Activated CD8-positive, alpha-beta T cell treated with anti-CD3 and anti-CD28 coated beads for 36 hours (primary cell): ENCODE measurements at regions of chr7 and their contacts with region 1.

Region 1: GRCh38 chr7:89334797-89335196 is 539.3 kb upstream of the TEX47 start:
- DNase-seq: no peak
- ATAC-seq: no peak
- H3K4me3 Mint-ChIP-seq: no peak overlapping the region
- H3K27ac Mint-ChIP-seq: no peak overlapping the region
- H3K4me1 Mint-ChIP-seq: peaks cover 2% of the 10 kb centered on the region
- H3K27me3 Mint-ChIP-seq: no peaks in the 10 kb centered on the region
- CTCF ChIP-seq: no peak

Region 2: DNA sequence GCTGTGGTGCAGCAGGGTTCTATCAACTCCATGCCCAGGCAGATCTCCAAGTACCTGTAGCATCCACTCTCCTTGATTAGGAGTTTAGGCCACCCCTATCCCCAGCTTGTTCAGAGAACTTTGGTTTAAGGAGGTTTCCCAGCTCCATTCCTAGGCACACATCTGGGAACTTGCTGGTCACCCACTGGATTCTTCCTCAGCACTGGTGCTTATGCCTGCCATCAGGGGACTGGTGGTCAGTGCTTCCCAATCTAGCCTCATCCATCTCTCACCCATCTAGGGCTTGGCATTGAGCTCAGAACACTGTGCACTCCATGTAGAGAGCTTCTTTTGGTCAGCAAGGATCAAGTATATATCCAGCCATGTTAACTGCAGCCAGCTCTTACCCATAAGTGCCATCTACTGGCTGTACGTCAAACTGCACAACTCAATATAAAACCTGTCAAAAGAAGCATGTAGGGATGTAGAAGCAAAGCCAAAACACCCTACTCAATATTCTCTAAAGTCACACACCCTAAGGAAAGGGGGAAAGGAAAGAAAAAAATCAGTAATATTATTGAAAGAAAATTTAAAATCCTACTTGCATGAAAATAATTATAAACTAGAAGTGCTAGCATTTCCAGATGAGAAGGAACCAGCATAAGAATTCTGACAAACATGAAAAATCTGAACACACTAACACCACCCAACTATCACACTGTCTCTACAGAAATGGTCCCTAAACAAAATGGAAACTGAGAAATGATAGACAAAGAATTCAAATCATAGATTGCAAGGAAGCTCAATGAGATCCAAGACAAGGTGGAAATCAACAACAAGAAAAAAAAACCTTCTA is 288.3 kb after region 1 on chr7:
- CTCF ChIA-PET with region 1: interaction called, 4 read pairs
- POLR2A ChIA-PET with region 1: no interaction called
- intact Hi-C with region 1: loop called (anchors 5 kb)
- DNase-seq: peak; percentile 45
- ATAC-seq: peak; percentile 88
- H3K4me3 Mint-ChIP-seq: no peak overlapping the region
- H3K27ac Mint-ChIP-seq: no peak overlapping the region
- H3K4me1 Mint-ChIP-seq: peaks cover 23% of the 10 kb centered on the region
- H3K27me3 Mint-ChIP-seq: no peaks in the 10 kb centered on the region
- CTCF ChIP-seq: peak; percentile 68